ENCODE measurements at regions of chr17 and their contacts with region 1.

Region 1: DNA sequence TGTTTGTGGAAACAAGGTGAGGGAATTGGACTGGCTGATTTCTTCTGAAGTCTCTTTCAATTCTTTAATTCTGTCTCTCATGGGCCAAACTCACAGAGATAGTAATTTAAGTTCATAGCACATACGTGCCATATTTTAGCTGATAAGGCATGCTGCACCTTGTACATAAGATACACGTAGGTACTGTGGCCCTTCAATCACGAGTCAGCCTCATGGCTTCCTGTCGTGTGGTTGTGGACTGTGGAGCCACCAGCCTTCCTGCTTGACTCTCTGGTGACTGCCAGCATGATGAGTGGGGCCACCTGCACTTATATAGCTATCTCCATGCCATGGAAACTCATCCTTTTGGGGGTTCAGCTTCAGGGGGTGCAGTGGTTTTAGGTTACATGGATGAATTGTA is 25.1 kb downstream of the KSR1 start:
- DNase-seq: peak; percentile 83
- H3K4me3 Mint-ChIP-seq: no peak overlapping the region
- H3K27ac Mint-ChIP-seq: peak overlapping the region; percentile 79
- H3K4me1 Mint-ChIP-seq: peaks cover 57% of the 10 kb centered on the region
- H3K27me3 Mint-ChIP-seq: no peaks in the 10 kb centered on the region

Region 2: GRCh38 chr17:27466743-27467375 is 14.5 kb before region 1 on chr17:
- CTCF ChIA-PET with region 1: interaction called, 9 read pairs
- POLR2A ChIA-PET with region 1: interaction called, 16 read pairs
- DNase-seq: peak; percentile 85
- H3K4me3 Mint-ChIP-seq: peak overlapping the region; percentile 61
- H3K27ac Mint-ChIP-seq: peak overlapping the region; percentile 89
- H3K4me1 Mint-ChIP-seq: peaks cover 86% of the 10 kb centered on the region
- H3K27me3 Mint-ChIP-seq: no peaks in the 10 kb centered on the region